ENCODE measurements at regions of chr5 and their contacts with region 1.

Region 1: GRCh38 chr5:147188200-147189108 is 46.4 kb upstream of the STK32A start:
- DNase-seq: no peak
- ATAC-seq: peak; percentile 51 to 52
- H3K4me3 ChIP-seq: peak overlapping the region in 3 of 4 donors; percentile 19 to 34 (median 32)
- H3K27ac ChIP-seq: no peak overlapping the region
- H3K4me1 ChIP-seq: no peaks in the 10 kb centered on the region
- H3K27me3 ChIP-seq: no peaks in the 10 kb centered on the region
- CTCF ChIP-seq: peak; percentile 40 to 83 (median 69)
- POLR2A ChIP-seq: no peak

Region 2: DNA sequence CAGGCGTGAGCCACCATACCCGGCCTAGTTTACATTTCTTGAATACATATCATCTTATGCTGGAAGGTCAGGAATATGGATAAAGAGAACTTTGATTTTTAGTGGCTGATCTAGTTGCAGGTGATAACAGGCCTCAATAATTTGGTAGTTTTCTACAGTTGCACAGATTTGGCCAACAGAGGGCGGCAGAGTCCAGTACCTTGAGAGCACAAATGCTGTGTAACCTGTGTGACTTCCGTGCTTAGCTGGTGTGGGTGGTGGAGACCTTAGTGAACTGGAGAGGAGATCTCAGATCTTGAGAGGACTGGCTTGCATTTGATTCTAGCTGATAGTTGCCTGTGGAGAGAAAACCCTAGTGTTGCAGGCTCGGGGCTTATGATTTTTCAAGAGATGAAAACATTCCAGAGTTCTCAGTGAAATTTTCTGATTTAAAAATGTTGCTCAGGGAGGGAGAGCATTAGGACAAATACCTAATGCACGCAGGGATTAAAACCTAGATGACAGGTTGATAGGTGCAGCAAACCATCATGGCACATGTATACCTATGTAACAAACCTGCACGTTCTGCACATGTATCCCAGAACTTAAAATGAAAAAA is 655.1 kb before region 1 on chr5:
- in situ Hi-C with region 1: loop called (anchors 25 kb)
- intact Hi-C with region 1: loop called (anchors 2 kb)
- DNase-seq: peak; percentile 11 to 17
- ATAC-seq: peak in 1 of 2 donors; percentile 72
- H3K4me3 ChIP-seq: no peak overlapping the region
- H3K27ac ChIP-seq: no peak overlapping the region
- H3K4me1 ChIP-seq: no peaks in the 10 kb centered on the region
- H3K27me3 ChIP-seq: no peaks in the 10 kb centered on the region
- CTCF ChIP-seq: peak; percentile 26 to 62 (median 44)
- POLR2A ChIP-seq: no peak

Region 3: GRCh38 chr5:146541958-146542849 is 646.2 kb before region 1 on chr5:
- in situ Hi-C with region 1: loop called (anchors 25 kb)
- intact Hi-C with region 1: loop called (anchors 2 kb)
- DNase-seq: peak; percentile 28 to 47
- ATAC-seq: peak; percentile 62 to 87
- H3K4me3 ChIP-seq: no peak overlapping the region
- H3K27ac ChIP-seq: no peak overlapping the region
- H3K4me1 ChIP-seq: no peaks in the 10 kb centered on the region
- H3K27me3 ChIP-seq: no peaks in the 10 kb centered on the region
- CTCF ChIP-seq: peak; percentile 48 to 76 (median 63)
- POLR2A ChIP-seq: no peak

Region 4: DNA sequence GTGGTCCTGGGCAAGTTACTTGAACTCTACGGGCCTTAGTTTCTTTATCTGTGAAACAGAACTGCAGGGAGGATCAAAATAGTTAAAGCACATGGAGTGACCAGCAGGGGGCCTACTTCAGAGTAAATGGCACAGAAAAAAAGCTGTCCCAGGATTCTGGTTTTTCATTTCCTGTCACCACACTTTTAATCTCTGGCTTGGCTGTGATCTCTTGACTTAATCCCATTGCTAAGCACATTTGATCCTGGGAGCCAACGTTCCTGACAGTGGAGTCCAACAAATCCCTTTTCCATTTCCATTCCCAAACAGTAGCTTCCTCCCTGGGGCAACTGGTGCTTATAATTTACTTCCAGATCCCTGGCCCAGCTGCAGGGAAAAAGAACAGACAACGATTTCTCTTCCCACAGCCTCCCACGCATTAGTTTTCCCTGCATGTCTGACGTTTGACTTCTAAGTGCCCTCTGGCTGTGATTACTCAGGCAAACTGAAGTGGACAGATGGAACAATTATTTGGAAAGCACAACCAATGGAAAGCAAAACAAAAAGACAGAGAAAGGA is 90.1 kb before region 1 on chr5:
- in situ Hi-C with region 1: no loop called
- intact Hi-C with region 1: loop called (anchors 10 kb)
- DNase-seq: no peak
- ATAC-seq: no peak
- H3K4me3 ChIP-seq: no peak overlapping the region
- H3K27ac ChIP-seq: no peak overlapping the region
- H3K4me1 ChIP-seq: no peaks in the 10 kb centered on the region
- H3K27me3 ChIP-seq: no peaks in the 10 kb centered on the region
- CTCF ChIP-seq: peak in 2 of 5 experiments; percentile 32 to 34
- POLR2A ChIP-seq: no peak

Region 5: DNA sequence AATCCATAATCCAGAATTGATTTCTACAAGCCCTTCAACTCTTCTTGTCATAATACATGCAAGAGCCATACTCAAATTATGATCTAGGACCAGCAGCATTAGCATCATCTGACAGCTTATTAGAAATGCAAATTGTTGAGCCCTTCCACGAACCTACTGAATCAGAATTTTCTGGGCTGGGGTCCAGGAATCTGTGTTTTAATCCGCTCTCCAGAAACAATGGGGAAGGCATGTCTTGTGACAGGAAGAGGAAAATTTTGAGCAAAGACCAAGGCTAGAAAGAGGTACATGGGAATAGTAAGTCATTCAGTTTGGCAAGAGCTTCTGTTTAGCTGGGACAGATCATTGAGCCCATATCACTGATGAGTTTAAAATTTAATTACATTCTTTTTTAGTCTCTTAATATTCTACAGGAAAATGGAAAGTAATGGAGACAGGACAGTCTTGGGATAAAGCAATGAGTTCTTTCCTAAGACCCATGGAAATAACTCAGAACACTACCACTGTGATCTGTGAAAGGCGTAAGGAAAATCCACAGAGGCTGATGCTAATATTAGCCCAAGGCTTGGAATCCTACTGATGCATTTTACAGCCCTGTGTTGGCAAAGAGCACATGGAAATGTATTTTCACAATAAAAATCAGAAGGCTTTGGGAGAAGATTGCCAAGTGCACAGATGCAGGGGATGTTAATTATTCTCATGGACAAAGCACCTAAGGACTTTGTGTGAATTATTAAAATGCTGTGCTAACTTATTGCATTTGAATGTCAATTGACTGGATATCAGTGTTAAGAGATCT is 27.4 kb before region 1 on chr5:
- in situ Hi-C with region 1: no loop called
- intact Hi-C with region 1: no loop called
- DNase-seq: no peak
- ATAC-seq: no peak
- H3K4me3 ChIP-seq: no peak overlapping the region
- H3K27ac ChIP-seq: no peak overlapping the region
- H3K4me1 ChIP-seq: peaks cover 0 to 7% of the 10 kb centered on the region in 2 donors
- H3K27me3 ChIP-seq: no peaks in the 10 kb centered on the region
- CTCF ChIP-seq: no peak
- POLR2A ChIP-seq: no peak

Region 6: GRCh38 chr5:147857302-147858129 is 669.1 kb after region 1 on chr5:
- in situ Hi-C with region 1: no loop called
- intact Hi-C with region 1: no loop called
- DNase-seq: no peak
- ATAC-seq: no peak
- H3K4me3 ChIP-seq: no peak overlapping the region
- H3K27ac ChIP-seq: no peak overlapping the region
- H3K4me1 ChIP-seq: no peaks in the 10 kb centered on the region
- H3K27me3 ChIP-seq: no peaks in the 10 kb centered on the region
- CTCF ChIP-seq: peak; percentile 31 to 70 (median 51)
- POLR2A ChIP-seq: no peak